Mucosa of descending colon (tissue), 3 donors: ENCODE measurements at regions of chr16 and their contacts with region 1.

Region 1: GRCh38 chr16:49921791-49922456 is 66.0 kb upstream of the ZNF423 start:
- DNase-seq: peak in 2 of 3 donors; percentile 81 to 90
- ATAC-seq: peak; percentile 88
- H3K4me3 ChIP-seq: no peak overlapping the region
- H3K4me1 ChIP-seq: no peaks in the 10 kb centered on the region
- CTCF ChIP-seq: peak; percentile 32

Region 2: DNA sequence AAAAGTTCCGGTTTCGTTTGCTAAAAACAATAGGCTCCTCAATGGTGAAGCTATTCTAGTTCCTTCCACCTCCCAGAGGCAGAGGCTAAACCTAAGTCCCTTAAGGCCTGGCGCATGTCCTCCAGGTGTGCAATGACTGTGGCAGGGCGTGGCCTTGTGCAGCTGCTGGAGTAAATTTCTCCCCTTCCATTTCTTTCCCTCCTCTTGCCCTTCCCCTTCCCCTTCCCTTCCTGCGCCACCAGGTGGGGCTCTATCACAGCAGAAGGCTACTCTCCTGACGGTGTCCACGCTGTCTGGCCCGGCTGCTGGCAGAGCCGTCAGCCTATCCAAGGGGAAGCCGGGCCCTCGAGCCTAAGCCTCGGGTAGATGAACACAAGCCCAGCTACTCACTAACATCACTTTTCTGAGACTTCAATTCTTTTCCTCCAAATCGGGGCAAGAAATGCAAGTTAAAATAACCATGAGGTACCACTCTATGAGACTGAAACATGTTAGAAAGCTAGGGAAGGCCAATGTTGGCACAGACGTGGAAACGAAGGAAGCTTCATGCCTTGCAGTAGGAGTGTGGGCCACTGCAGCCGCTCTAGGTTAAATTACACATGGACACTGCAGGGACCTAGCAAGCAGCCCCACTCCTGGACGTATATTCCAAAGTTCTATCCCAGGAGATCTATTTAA is 513.9 kb before region 1 on chr16:
- intact Hi-C with region 1: loop called in 1 of 2 experiments (anchors 5 kb)
- DNase-seq: peak; percentile 83 to 91 (median 87)
- ATAC-seq: peak; percentile 99
- H3K4me3 ChIP-seq: no peak overlapping the region
- H3K4me1 ChIP-seq: no peaks in the 10 kb centered on the region
- CTCF ChIP-seq: peak; percentile 83

Region 3: DNA sequence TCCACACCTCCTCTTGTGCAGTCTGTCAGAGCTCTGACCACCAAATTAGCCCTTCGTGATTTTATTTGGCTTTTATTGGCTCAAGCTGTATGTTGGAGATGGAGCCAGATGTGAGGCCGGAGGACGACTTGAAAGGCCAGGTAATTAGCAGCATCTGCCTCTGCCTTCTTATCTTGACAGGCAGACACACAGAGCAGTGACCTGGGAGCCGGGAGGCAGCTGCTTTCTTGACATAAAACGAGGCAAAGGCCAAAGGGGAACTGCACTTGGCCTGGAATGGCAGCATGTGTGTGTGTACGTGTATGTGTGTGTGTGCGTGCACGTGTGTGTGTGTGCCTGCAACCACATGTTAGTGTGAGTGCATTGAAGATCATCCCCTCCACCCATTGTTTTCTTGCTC is 503.7 kb after region 1 on chr16:
- intact Hi-C with region 1: no loop called
- DNase-seq: no peak
- ATAC-seq: no peak
- H3K4me3 ChIP-seq: no peak overlapping the region
- H3K4me1 ChIP-seq: no peaks in the 10 kb centered on the region
- CTCF ChIP-seq: no peak